Activated CD4-positive, alpha-beta T cell treated with anti-CD3 and anti-CD28 coated beads, Interleukin-2, amount 10 ng/mL, durations not matched to agents 24 days and 14 days (primary cell): ENCODE measurements at regions of chr6 and their contacts with region 1.

Region 1: DNA sequence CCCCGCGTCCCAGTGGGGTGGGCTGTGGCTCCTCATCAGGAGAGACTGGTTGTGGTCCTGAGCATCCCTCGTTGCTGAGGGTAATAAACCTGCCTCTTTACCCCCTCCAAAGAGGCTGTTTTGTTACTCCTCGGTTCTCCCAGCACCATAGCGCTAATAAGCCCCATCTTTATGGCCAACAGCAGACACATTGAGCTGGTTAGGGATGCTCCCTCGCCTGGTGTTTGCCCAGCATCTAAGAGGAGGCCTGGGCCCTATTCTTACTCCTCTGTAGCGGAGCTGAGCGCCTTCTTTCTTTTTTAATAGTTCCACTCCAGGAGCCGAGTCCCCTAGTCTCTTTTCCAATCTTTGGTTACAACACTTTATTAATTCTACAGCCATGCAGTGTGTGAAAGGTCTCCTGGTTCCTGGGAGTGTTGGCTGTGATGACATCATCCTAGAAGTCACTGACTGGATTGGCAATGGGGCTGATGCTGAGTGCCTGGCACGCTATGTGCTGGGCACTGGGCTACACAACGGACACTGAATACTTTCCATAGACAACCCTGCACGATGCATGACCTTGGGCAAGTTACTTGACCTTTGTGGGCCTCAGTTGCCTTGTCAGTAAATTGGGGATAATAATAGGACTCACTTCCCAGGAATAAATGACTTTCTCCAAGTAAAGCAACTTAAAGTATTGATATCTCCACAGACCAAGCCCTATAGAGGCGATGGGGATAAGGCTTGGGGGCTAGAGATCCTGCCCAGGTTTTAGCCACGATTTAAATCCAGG is 50.7 kb upstream of the CCDC167 start:
- DNase-seq: no peak
- H3K4me3 Mint-ChIP-seq: no peak overlapping the region
- H3K27ac Mint-ChIP-seq: no peak overlapping the region
- H3K4me1 Mint-ChIP-seq: peaks cover 27% of the 10 kb centered on the region
- H3K27me3 Mint-ChIP-seq: no peaks in the 10 kb centered on the region

Region 2: GRCh38 chr6:37499433-37500293 is 50.7 kb before region 1 on chr6 and contains the start of gene CCDC167:
- intact Hi-C with region 1: loop called (anchors 1 kb)
- DNase-seq: peak; percentile 99
- H3K4me3 Mint-ChIP-seq: peak within 1 kb of the TSS; percentile 93
- H3K27ac Mint-ChIP-seq: peak within 1 kb of the TSS; percentile 94
- H3K4me1 Mint-ChIP-seq: peaks cover 70% of the 10 kb centered on the region
- H3K27me3 Mint-ChIP-seq: no peaks in the 10 kb centered on the region
- total RNA-seq, gene CCDC167: 59.1 and 62.4 TPM in 2 replicates

Region 3: GRCh38 chr6:37516076-37516919 is 34.1 kb before region 1 on chr6:
- intact Hi-C with region 1: loop called (anchors 1 kb)
- DNase-seq: peak; percentile 94
- H3K4me3 Mint-ChIP-seq: peak overlapping the region; percentile 76
- H3K27ac Mint-ChIP-seq: peak overlapping the region; percentile 97
- H3K4me1 Mint-ChIP-seq: peaks cover 58% of the 10 kb centered on the region
- H3K27me3 Mint-ChIP-seq: no peaks in the 10 kb centered on the region

Region 4: DNA sequence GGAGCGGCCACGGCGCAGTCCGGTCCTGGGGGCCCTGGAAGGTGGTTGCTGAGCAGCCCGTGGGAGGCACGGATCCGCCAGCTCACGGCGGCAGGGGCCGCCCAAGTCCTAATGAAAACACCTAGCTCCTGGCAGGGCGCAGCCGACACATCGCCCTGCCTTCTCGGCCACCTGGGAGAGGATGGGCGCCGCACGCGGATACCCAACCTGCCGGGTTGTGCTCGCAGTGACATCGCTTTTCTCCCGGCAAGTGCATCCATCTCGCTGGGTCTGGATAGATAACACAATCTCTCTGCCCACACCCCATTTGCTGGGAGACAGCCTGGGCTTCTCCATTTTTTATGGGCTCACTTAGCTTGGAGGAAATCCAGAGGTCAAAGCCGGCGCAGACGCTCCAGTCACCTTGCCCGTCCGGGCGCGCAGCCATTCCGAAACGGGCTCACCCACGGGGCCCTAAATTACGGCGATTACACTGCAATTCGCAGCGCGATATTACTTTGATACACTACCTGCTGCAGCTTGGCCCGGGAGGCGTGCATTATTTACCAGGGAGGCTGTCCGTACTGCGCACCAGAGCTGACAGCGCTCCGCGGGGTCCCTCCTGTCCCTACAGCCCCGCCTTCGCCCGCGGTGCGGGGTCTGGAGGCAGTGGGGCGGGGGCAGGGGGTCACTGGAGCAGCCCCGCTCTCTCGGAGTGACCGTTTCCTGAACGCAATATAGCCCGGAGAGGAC is 14.5 kb before region 1 on chr6:
- intact Hi-C with region 1: loop called (anchors 2 kb)
- DNase-seq: peak; percentile 67
- H3K4me3 Mint-ChIP-seq: peak overlapping the region; percentile 64
- H3K27ac Mint-ChIP-seq: no peak overlapping the region
- H3K4me1 Mint-ChIP-seq: peaks cover 12% of the 10 kb centered on the region
- H3K27me3 Mint-ChIP-seq: peaks cover 55% of the 10 kb centered on the region

Region 5: DNA sequence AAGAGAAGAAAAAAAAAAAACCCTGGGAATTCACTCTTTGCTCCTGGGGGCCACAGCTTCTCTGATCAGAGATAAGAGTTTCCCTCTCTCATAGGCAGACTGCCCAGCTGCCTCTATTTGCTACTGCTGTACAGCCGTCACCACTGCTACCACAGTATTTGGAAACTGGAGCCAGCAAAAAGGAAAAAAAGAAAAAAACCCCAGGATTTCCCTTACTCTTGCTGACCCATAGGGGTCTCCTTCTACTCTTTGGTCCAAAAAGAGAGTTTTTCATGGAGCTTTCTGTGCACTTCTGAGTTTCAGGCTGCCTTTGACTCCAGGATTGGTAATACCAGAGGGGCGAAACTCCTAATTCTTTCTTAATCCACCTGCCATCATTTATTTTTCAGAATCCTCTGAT is 57.6 kb after region 1 on chr6:
- intact Hi-C with region 1: no loop called
- DNase-seq: no peak
- H3K4me3 Mint-ChIP-seq: no peak overlapping the region
- H3K27ac Mint-ChIP-seq: no peak overlapping the region
- H3K4me1 Mint-ChIP-seq: no peaks in the 10 kb centered on the region
- H3K27me3 Mint-ChIP-seq: peaks cover 36% of the 10 kb centered on the region